ENCODE measurements at regions of chr1 and their contacts with region 1.

Region 1: DNA sequence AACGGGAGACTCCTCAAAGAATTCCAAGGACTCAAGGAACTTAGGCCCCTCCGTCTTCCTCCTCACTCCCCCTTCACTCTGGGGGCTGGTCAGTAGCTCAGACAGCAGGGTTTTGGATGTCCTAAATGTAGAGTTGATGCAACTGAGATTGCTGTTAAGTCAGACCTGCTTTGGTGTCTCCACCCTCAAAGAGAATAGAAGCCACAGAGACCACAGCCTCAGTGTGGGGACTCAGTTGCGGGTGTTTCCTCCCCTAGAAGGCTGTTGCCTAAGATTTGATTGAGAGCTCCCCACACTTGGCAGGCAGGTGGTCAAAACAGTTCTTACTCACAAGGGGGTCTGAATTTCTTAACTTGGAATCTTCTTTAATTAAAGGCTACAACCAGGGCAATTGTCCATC is 7.6 kb downstream of the MAN1C1 start:
- DNase-seq: no peak
- ATAC-seq: no peak

Region 2: GRCh38 chr1:25447547-25447946 is 176.6 kb before region 1 on chr1:
- intact Hi-C with region 1: no loop called
- DNase-seq: no peak
- ATAC-seq: no peak

Region 3: GRCh38 chr1:25688390-25689161 is 64.4 kb after region 1 on chr1:
- intact Hi-C with region 1: loop called in 1 of 2 experiments (anchors 10 kb)
- DNase-seq: peak in 1 of 2 donors; percentile 41
- ATAC-seq: peak; percentile 95

Measured in left colon (tissue), 2 donors.